Activated B cell treated with CpG ODN at 0.5 μM for 24 hours (primary cell): ENCODE measurements at regions of chr1 and their contacts with region 1.

Region 1: DNA sequence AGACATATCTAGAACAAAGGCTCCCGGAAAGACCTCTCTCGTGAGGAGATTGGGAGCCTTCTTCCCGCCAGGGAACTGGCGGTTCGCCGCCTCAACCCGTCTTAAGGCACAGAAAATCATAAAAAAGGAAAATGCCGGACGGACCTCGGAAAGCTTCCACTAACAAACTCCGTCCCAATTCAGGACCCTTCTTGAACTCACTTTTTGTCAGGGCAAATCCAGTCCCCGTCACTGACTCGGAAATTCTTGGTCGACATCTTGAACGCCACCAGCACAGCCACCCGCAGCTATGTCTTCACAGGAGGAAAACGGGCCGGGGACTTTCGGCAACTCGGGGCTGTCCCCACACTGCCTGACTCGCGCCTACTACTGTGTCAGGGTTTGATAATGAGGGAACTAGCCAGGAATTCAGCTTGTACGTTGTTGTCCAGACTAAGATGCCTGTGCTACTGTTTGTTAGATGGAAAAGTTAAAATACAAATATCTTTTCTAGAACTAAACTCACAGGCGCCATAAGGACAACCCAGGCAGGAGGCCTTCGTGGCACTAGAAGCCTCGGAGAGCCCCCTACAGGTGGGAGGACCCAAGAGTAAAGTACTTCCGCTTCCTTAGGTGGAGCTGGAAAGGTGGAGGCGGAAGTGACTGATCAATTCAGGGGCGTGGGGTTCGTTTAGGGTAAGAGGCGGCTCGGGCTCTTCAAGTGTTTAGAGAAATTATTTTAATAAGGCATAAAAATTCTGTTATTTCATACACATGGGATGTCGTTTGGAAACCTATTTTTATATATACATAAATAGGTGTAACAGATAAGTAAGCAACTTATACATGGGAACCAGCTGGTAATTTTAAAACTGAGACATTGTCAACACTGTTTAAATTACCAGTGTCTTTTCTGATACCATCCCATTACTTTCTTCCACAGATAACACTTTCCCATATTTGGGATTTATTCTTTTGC is at the start of gene ZRANB2:
- DNase-seq: peak; percentile 76
- ATAC-seq: peak; percentile 97
- H3K4me3 Mint-ChIP-seq: peak within 1 kb of the TSS; percentile 98
- H3K27ac Mint-ChIP-seq: peak within 1 kb of the TSS; percentile 99
- H3K4me1 Mint-ChIP-seq: peaks cover 29% of the 10 kb centered on the region
- H3K27me3 Mint-ChIP-seq: peaks cover 19% of the 10 kb centered on the region
- CTCF ChIP-seq: no peak
- total RNA-seq, gene ZRANB2: 118 and 130 TPM in 2 replicates

Region 2: GRCh38 chr1:70221241-70222121 is 859.5 kb before region 1 on chr1 and contains the start of gene SRSF11:
- CTCF ChIA-PET with region 1: interaction called, 3 read pairs
- POLR2A ChIA-PET with region 1: interaction called, 16 read pairs
- intact Hi-C with region 1: loop called (anchors 1 kb)
- DNase-seq: peak; percentile 97
- ATAC-seq: peak; percentile 95
- H3K4me3 Mint-ChIP-seq: peak within 1 kb of the TSS; percentile 91
- H3K27ac Mint-ChIP-seq: peak within 1 kb of the TSS; percentile 93
- H3K4me1 Mint-ChIP-seq: peaks cover 44% of the 10 kb centered on the region
- H3K27me3 Mint-ChIP-seq: no peaks in the 10 kb centered on the region
- CTCF ChIP-seq: no peak
- total RNA-seq, gene SRSF11: 182 and 231 TPM in 2 replicates

Region 3: DNA sequence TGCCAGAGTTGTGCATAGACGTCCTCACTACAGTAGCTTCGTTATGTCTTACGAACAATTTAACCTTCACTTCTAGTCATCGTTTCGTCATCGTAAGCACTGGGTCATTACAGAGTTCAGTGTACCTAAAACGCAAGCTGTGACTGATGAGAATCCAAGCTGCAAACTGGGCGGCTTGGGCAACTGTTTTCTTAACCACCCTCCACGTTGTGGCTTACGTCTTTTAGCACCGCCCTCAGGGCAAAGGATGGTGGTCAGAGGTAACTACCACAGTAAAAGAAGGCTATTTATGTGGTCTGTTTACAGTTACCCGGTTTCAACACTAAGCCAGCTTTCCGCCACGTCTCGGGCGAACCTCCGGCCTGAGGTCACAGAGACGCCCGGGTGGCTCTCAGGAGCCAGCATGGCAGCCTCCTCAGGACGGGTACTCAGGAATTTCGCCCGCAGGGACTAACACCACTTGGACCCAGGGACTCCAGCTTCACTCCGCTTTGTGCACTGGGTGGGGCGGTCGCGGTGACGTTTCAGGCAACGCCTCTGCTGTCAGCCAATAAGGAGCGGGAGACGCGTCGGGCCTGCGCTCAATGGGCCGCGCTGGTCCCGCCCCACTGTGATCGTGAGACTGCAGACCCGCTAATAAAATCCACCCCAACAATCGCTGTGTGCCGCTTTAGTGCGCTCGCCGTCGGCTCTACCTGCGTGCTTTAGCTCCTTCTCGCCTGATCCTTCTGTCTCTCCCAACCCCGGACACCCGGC is 670.2 kb before region 1 on chr1 and contains the start of gene CTH:
- CTCF ChIA-PET with region 1: no interaction called
- POLR2A ChIA-PET with region 1: interaction called, 13 read pairs
- intact Hi-C with region 1: loop called (anchors 1 kb)
- DNase-seq: peak; percentile 90
- ATAC-seq: peak; percentile 97
- H3K4me3 Mint-ChIP-seq: peak within 1 kb of the TSS; percentile 95
- H3K27ac Mint-ChIP-seq: peak within 1 kb of the TSS; percentile 98
- H3K4me1 Mint-ChIP-seq: peaks cover 26% of the 10 kb centered on the region
- H3K27me3 Mint-ChIP-seq: peaks cover 11% of the 10 kb centered on the region
- CTCF ChIP-seq: no peak
- total RNA-seq, gene CTH: 4.3 TPM in 2 replicates

Region 4: DNA sequence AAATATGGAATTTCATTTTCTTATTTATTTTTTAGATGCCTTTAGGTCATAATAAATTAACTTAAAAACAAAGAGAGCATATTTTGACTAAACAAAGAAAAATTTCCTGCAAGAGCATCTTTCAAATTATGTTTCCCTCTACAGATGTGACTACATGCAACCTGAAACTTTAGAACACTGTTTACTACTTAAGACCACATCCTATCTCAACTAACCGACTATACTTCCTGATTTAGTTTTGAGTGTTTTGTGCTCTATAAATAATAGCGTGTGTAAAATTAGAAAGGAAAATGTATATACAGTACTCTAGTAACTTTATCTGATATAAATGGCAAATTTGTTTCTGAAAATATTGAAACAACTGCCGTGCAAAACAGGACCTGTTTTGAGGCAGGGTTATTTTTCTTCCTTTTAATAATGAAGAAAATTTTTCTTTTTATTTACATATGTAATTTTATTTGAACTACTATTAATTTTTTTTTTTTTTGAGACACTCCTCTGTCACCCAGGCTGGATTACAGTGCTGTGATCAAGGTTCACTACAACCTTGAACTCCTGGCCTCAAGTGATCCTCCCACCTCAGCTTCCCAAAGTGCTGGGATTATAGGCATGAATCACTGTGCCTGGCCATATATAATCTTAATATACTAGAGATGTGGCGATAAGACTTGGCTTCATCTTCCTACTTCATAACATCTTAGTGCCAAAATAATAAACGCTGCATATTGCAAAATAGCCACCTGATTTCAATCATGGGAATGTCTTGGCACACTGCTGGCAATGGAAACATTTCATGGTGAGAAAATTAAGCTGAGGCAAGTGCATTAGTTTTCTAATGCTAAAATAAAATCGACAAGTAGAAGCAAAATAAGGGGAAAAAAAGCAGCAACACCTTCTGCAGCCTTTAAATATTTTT is 12.4 kb before region 1 on chr1:
- CTCF ChIA-PET with region 1: no interaction called
- POLR2A ChIA-PET with region 1: interaction called, 6 read pairs
- intact Hi-C with region 1: loop called (anchors 2 kb)
- DNase-seq: no peak
- ATAC-seq: no peak
- H3K4me3 Mint-ChIP-seq: no peak overlapping the region
- H3K27ac Mint-ChIP-seq: no peak overlapping the region
- H3K4me1 Mint-ChIP-seq: peaks cover 2% of the 10 kb centered on the region
- H3K27me3 Mint-ChIP-seq: no peaks in the 10 kb centered on the region
- CTCF ChIP-seq: no peak

Region 5: DNA sequence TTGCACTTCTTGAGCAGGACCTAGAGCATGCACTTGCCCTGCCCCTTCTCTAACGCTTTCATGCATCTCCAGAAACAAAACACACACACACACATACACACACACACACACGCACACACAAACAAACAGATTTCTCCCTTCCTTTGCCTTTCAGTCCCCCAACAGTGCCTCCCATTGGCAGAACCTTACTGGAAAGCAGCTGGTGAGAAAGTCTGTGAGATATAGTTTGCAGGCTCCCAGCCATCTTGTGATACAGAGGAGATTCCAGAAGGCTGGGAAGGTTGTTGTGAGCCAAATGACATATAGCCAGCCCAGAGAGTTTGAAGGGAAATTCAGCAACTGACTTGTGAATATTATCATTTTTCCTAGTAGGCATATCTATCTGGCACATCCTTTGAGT is 35.7 kb after region 1 on chr1:
- CTCF ChIA-PET with region 1: no interaction called
- POLR2A ChIA-PET with region 1: no interaction called
- intact Hi-C with region 1: no loop called
- DNase-seq: no peak
- ATAC-seq: no peak
- H3K4me3 Mint-ChIP-seq: no peak overlapping the region
- H3K27ac Mint-ChIP-seq: no peak overlapping the region
- H3K4me1 Mint-ChIP-seq: no peaks in the 10 kb centered on the region
- H3K27me3 Mint-ChIP-seq: no peaks in the 10 kb centered on the region
- CTCF ChIP-seq: no peak